ENCODE measurements at regions of chr5 and their contacts with region 1.

Region 1: DNA sequence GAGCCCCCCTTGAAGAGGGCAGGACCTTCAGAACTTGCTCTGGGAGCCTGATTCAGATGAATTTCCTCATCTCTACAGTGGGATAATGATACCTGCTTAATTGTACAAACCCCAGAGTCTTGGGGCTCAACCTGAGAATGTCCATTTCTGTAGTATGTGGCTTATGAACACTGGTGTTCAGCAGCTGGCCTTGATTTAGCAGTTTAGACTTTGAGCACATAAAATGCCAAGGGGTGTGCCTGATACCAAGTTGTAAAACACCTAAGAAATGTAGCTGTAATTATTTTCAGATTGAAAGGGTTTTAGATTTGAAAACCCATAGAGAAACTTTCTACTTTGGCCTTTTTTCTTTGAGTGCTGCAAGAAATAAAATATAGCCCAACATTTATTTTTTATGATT is 44.9 kb downstream of the SFXN1 start:
- H3K4me3 ChIP-seq: no peak overlapping the region
- H3K27ac ChIP-seq: no peak overlapping the region
- H3K4me1 ChIP-seq: no peaks in the 10 kb centered on the region
- CTCF ChIP-seq: no peak

Region 2: GRCh38 chr5:175718401-175719108 is 195.3 kb after region 1 on chr5:
- CTCF ChIA-PET with region 1: interaction called, 11 read pairs
- POLR2A ChIA-PET with region 1: no interaction called
- H3K4me3 ChIP-seq: no peak overlapping the region
- H3K27ac ChIP-seq: no peak overlapping the region
- H3K4me1 ChIP-seq: no peaks in the 10 kb centered on the region
- CTCF ChIP-seq: no peak

Measured in HEK293 (cell line).